Testis (tissue), 5 donors: ENCODE measurements at regions of chr6 and their contacts with region 1.

Region 1: GRCh38 chr6:41039060-41039998 is at the start of gene UNC5CL:
- DNase-seq: peak; percentile 49
- H3K4me3 ChIP-seq: no peak within 1 kb of the TSS
- H3K27ac ChIP-seq: no peak within 1 kb of the TSS
- H3K4me1 ChIP-seq: no peaks in the 10 kb centered on the region
- H3K27me3 ChIP-seq: no peaks in the 10 kb centered on the region
- CTCF ChIP-seq: peak in 2 of 3 experiments; percentile 42 to 51
- POLR2A ChIP-seq: no peak
- total RNA-seq, gene UNC5CL: 2.0 to 3.2 TPM

Region 2: DNA sequence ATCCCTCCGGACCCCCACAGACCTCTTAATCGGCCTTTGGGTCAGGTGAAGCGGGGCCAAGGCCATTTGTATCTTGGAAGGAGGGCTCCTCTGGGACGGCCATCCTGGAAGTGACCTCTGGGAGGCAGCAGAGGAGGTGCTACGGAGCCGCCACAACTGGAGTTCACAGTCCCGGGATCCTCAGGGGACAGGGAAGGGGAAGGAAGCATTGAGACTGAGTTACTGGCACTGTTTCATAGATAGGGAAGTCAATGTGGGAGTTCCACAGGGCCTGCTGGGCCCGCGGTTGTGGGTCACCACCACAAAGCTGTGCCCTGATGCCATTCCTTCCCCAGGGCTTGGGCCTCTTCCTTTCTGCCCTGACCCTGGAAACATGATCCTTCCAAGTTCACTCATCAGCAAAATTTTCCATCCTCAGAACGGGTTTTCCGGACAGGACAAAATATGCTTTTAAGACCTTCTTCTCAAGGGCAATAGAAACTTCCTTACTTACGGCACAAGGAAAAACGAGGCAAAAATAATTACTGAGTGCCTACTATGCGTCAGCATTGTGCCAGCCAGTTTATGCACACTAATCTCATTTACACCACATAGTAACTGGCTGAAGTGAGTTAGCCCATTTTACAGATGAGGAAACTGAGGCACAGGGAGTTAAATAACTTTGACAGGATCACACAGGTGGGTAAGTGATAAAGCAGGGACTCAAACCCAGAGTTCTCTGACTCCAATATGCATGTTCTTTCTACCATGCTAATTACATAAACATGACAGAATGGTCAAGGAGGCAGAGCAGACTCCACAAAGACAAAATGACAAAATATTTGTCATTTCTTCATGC is 144.1 kb before region 1 on chr6:
- intact Hi-C with region 1: loop called (anchors 10 kb)
- DNase-seq: peak; percentile 74
- H3K4me3 ChIP-seq: no peak overlapping the region
- H3K27ac ChIP-seq: no peak overlapping the region
- H3K4me1 ChIP-seq: peaks cover 33% of the 10 kb centered on the region
- H3K27me3 ChIP-seq: no peaks in the 10 kb centered on the region
- CTCF ChIP-seq: peak; percentile 32 to 43 (median 41)
- POLR2A ChIP-seq: no peak

Region 3: GRCh38 chr6:40947876-40948526 is 91.3 kb before region 1 on chr6:
- intact Hi-C with region 1: no loop called
- DNase-seq: no peak
- H3K4me3 ChIP-seq: no peak overlapping the region
- H3K27ac ChIP-seq: no peak overlapping the region
- H3K4me1 ChIP-seq: no peaks in the 10 kb centered on the region
- H3K27me3 ChIP-seq: no peaks in the 10 kb centered on the region
- CTCF ChIP-seq: no peak
- POLR2A ChIP-seq: no peak

Region 4: GRCh38 chr6:41386594-41386993 is 347.3 kb after region 1 on chr6:
- intact Hi-C with region 1: no loop called
- DNase-seq: no peak
- H3K4me3 ChIP-seq: no peak overlapping the region
- H3K27ac ChIP-seq: no peak overlapping the region
- H3K4me1 ChIP-seq: no peaks in the 10 kb centered on the region
- H3K27me3 ChIP-seq: no peaks in the 10 kb centered on the region
- CTCF ChIP-seq: no peak
- POLR2A ChIP-seq: no peak

Region 5: GRCh38 chr6:41470331-41471063 is 431.2 kb after region 1 on chr6:
- intact Hi-C with region 1: no loop called
- DNase-seq: peak; percentile 32
- H3K4me3 ChIP-seq: peak overlapping the region; percentile 18 to 38
- H3K27ac ChIP-seq: no peak overlapping the region
- H3K4me1 ChIP-seq: peaks cover 5% of the 10 kb centered on the region
- H3K27me3 ChIP-seq: no peaks in the 10 kb centered on the region
- CTCF ChIP-seq: no peak
- POLR2A ChIP-seq: no peak